ENCODE measurements at regions of chr17 and their contacts with region 1.

Region 1: GRCh38 chr17:19766422-19767270 is 18.5 kb upstream of the ALDH3A1 start:
- DNase-seq: peak; percentile 57 to 77 (median 68)
- H3K4me3 ChIP-seq: no peak overlapping the region
- H3K4me3 Mint-ChIP-seq: no peak overlapping the region
- H3K27ac ChIP-seq: no peak overlapping the region
- H3K27ac Mint-ChIP-seq: peak overlapping the region in 1 of 8 donors; percentile 74
- H3K4me1 ChIP-seq: peaks cover 52% of the 10 kb centered on the region
- H3K4me1 Mint-ChIP-seq: peaks cover 12 to 18% (median 15%) of the 10 kb centered on the region in 3 donors
- H3K27me3 ChIP-seq: no peaks in the 10 kb centered on the region
- H3K27me3 Mint-ChIP-seq: peaks cover 5 to 16% of the 10 kb centered on the region in 2 donors

Region 2: GRCh38 chr17:19377602-19378392 is 388.8 kb before region 1 on chr17:
- CTCF ChIA-PET with region 1: no interaction called
- POLR2A ChIA-PET with region 1: interaction called, 10 read pairs
- DNase-seq: peak; percentile 89 to 96 (median 93)
- H3K4me3 ChIP-seq: peak overlapping the region; percentile 100
- H3K4me3 Mint-ChIP-seq: peak overlapping the region; percentile 94 to 100 (median 97)
- H3K27ac ChIP-seq: peak overlapping the region; percentile 95
- H3K27ac Mint-ChIP-seq: peak overlapping the region; percentile 92 to 98 (median 96)
- H3K4me1 ChIP-seq: peaks cover 11% of the 10 kb centered on the region
- H3K4me1 Mint-ChIP-seq: peaks cover 25 to 31% (median 26%) of the 10 kb centered on the region in 3 donors
- H3K27me3 ChIP-seq: no peaks in the 10 kb centered on the region
- H3K27me3 Mint-ChIP-seq: no peaks in the 10 kb centered on the region

Region 3: DNA sequence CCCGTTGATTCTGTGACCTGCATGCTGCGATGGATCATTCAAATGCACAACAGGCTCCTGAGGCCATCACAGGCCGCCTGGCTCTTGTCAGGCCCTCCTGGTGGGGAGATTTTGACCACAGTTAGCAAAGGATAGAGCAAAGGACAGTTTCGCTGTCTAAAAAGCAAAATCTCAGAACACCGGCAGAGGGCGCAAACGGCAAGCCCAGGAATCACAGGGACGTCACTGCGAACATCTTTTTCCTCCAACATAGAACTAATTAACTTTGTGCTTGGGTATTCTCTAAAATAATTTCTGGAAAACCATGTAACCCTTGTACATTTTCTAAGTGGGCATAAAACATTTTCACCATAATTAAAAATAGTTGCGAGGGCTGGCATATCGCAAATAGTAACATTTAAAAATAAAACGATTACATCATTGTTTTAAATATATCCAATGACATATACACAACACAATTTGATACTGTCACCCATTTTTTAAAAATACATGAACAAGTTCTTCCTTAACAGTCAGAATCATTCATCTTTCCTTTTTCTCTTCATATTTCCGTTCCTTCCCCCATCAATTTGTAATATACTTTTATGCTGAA is 252.7 kb before region 1 on chr17:
- CTCF ChIA-PET with region 1: interaction called, 37 read pairs
- POLR2A ChIA-PET with region 1: no interaction called
- DNase-seq: peak; percentile 45 to 71 (median 50)
- H3K4me3 ChIP-seq: no peak overlapping the region
- H3K4me3 Mint-ChIP-seq: peak overlapping the region in 1 of 7 donors; percentile 28
- H3K27ac ChIP-seq: no peak overlapping the region
- H3K27ac Mint-ChIP-seq: peak overlapping the region in 5 of 8 donors; percentile 19 to 73 (median 29)
- H3K4me1 ChIP-seq: no peaks in the 10 kb centered on the region
- H3K4me1 Mint-ChIP-seq: peaks cover 0 to 8% (median 5%) of the 10 kb centered on the region in 3 donors
- H3K27me3 ChIP-seq: no peaks in the 10 kb centered on the region
- H3K27me3 Mint-ChIP-seq: no peaks in the 10 kb centered on the region

Region 4: DNA sequence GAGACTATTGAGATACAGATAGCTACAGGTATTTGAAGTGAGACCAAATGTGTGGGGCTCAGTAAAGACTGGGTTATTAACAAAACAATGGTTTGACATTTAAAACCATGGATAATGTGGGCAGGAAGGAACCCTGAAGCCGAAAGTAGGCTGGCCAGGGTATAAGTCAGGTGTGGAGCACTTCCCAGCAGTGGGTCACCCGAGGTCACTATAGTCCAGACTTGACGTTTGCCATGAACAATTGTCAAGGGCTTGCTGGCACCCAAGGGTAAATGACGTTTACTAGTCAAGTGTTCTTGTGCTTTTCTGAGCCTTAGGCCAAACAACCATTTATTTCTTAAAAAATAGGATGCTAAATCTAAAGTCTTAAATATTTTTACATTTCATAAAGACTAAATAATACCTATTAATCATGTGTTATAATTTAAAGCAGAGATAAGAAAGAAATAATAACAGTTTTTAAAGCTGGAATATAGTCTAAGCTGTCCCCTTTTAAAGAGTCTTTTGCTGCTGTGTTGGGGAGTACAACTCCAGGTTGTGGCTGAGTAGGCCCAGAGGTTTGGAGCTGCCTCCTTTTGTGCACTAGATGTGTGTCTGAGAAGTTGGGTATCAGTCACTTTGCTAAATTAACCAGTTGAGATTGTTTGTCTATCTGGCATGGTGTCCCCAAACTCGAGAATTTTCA is 102.4 kb before region 1 on chr17:
- CTCF ChIA-PET with region 1: no interaction called
- POLR2A ChIA-PET with region 1: no interaction called
- DNase-seq: no peak
- H3K4me3 ChIP-seq: no peak overlapping the region
- H3K4me3 Mint-ChIP-seq: no peak overlapping the region
- H3K27ac ChIP-seq: no peak overlapping the region
- H3K27ac Mint-ChIP-seq: no peak overlapping the region
- H3K4me1 ChIP-seq: no peaks in the 10 kb centered on the region
- H3K4me1 Mint-ChIP-seq: no peaks in the 10 kb centered on the region
- H3K27me3 ChIP-seq: no peaks in the 10 kb centered on the region
- H3K27me3 Mint-ChIP-seq: no peaks in the 10 kb centered on the region

Region 5: GRCh38 chr17:19718604-19719354 is 47.9 kb before region 1 on chr17:
- CTCF ChIA-PET with region 1: no interaction called
- POLR2A ChIA-PET with region 1: no interaction called
- DNase-seq: no peak
- H3K4me3 ChIP-seq: no peak overlapping the region
- H3K4me3 Mint-ChIP-seq: no peak overlapping the region
- H3K27ac ChIP-seq: no peak overlapping the region
- H3K27ac Mint-ChIP-seq: no peak overlapping the region
- H3K4me1 ChIP-seq: peaks cover under 1% of the 10 kb centered on the region
- H3K4me1 Mint-ChIP-seq: peaks cover 1% of the 10 kb centered on the region in 3 donors
- H3K27me3 ChIP-seq: no peaks in the 10 kb centered on the region
- H3K27me3 Mint-ChIP-seq: peaks cover 3 to 8% of the 10 kb centered on the region in 2 donors